Body of pancreas (tissue), 4 donors: ENCODE measurements at regions of chr4 and their contacts with region 1.

Region 1: DNA sequence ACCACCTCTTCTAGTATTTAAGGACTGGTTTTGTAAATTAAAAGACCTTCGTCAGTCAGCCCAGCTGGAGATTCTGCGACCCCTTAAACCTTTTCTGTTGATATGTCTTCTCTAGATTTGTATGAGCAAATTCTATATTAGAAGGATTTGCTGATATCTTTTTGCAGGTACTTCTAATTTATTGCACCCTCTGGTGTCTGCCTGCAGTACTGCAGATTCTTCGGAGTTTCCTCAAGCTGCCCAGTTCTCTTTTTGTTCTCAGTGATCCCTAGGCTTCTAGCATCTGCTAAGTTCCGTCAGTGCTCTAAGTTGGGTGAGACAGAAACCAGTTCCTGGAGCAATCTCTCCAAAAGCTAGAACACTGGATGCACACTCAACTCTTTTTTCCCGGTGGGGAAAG is 545.2 kb downstream of the C4orf33 start:
- DNase-seq: peak; percentile 64 to 78 (median 72)
- ATAC-seq: peak; percentile 72
- H3K4me3 ChIP-seq: no peak overlapping the region
- H3K27ac ChIP-seq: no peak overlapping the region
- H3K4me1 ChIP-seq: no peaks in the 10 kb centered on the region
- H3K27me3 ChIP-seq: no peaks in the 10 kb centered on the region
- CTCF ChIP-seq: peak; percentile 61 to 90 (median 77)
- POLR2A ChIP-seq: no peak

Region 2: GRCh38 chr4:129364747-129365452 is 276.3 kb before region 1 on chr4:
- intact Hi-C with region 1: loop called (anchors 5 kb)
- DNase-seq: no peak
- ATAC-seq: no peak
- H3K4me3 ChIP-seq: no peak overlapping the region
- H3K27ac ChIP-seq: no peak overlapping the region
- H3K4me1 ChIP-seq: no peaks in the 10 kb centered on the region
- H3K27me3 ChIP-seq: no peaks in the 10 kb centered on the region
- CTCF ChIP-seq: no peak
- POLR2A ChIP-seq: no peak